Naive thymus-derived CD4-positive, alpha-beta T cell (primary cell): ENCODE measurements at regions of chr1 and their contacts with region 1.

Region 1: GRCh38 chr1:108041360-108042142 is 76.6 kb upstream of the VAV3 start:
- DNase-seq: peak in 3 of 9 donors; percentile 14 to 25 (median 24)
- ATAC-seq: peak; percentile 66
- H3K4me3 ChIP-seq: peak overlapping the region; percentile 12
- H3K4me3 Mint-ChIP-seq: peak overlapping the region in 9 of 10 donors; percentile 12 to 75 (median 52)
- H3K27ac ChIP-seq: peak overlapping the region; percentile 30
- H3K27ac Mint-ChIP-seq: peak overlapping the region; percentile 1 to 86 (median 65)
- H3K4me1 ChIP-seq: peaks cover 8 to 20% of the 10 kb centered on the region in 2 donors
- H3K4me1 Mint-ChIP-seq: peaks cover 15 to 51% (median 30%) of the 10 kb centered on the region in 7 donors
- H3K27me3 ChIP-seq: no peaks in the 10 kb centered on the region
- H3K27me3 Mint-ChIP-seq: no peaks in the 10 kb centered on the region

Region 2: GRCh38 chr1:108057541-108057940 is 16.0 kb after region 1 on chr1:
- CTCF ChIA-PET with region 1: no interaction called
- POLR2A ChIA-PET with region 1: interaction called, 5 read pairs
- intact Hi-C with region 1: loop called in 1 of 2 experiments (anchors 2 kb)
- DNase-seq: no peak
- ATAC-seq: no peak
- H3K4me3 ChIP-seq: no peak overlapping the region
- H3K4me3 Mint-ChIP-seq: no peak overlapping the region
- H3K27ac ChIP-seq: no peak overlapping the region
- H3K27ac Mint-ChIP-seq: no peak overlapping the region
- H3K4me1 ChIP-seq: no peaks in the 10 kb centered on the region
- H3K4me1 Mint-ChIP-seq: peaks cover 0 to 4% (median 0%) of the 10 kb centered on the region in 7 donors
- H3K27me3 ChIP-seq: no peaks in the 10 kb centered on the region
- H3K27me3 Mint-ChIP-seq: no peaks in the 10 kb centered on the region

Region 3: GRCh38 chr1:108075055-108075454 is 33.5 kb after region 1 on chr1:
- CTCF ChIA-PET with region 1: no interaction called
- POLR2A ChIA-PET with region 1: no interaction called
- intact Hi-C with region 1: loop called in 1 of 2 experiments (anchors 2 kb)
- DNase-seq: no peak
- ATAC-seq: peak; percentile 58
- H3K4me3 ChIP-seq: no peak overlapping the region
- H3K4me3 Mint-ChIP-seq: no peak overlapping the region
- H3K27ac ChIP-seq: no peak overlapping the region
- H3K27ac Mint-ChIP-seq: peak overlapping the region in 2 of 9 donors; percentile 21 to 78
- H3K4me1 ChIP-seq: peaks cover 28 to 37% of the 10 kb centered on the region in 2 donors
- H3K4me1 Mint-ChIP-seq: peaks cover 24 to 60% (median 47%) of the 10 kb centered on the region in 7 donors
- H3K27me3 ChIP-seq: no peaks in the 10 kb centered on the region
- H3K27me3 Mint-ChIP-seq: no peaks in the 10 kb centered on the region

Region 4: DNA sequence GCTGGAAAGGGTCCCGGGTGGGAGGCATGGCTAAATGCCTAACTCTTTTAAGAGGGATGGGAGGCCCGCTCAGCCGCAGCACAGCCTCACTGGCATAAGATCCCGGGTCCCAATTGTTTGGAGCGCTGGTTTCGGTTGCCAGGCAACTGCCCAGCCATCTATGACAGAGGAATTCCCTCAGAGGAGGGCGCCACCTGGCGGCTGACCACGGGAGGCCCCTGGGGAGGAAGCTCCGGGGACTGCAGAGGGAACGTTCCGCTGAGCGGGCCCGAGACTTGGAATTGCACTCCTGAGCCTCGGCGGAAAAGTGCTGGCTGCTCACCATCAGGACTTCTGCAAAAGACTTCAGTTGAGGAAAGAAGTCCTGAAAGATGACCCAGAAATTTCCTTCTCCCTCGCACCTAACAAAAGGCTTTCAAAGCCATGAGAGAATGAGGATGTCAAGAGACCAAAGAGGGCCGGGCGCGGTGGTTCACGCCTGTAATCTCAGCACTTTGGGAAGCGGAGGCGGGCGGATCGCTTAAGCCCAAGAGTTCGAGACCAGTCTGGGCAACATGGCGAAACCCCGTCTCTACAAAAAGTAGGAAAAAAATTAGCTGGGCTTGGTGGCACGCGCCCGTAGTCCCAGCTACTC is 1071.2 kb after region 1 on chr1:
- CTCF ChIA-PET with region 1: no interaction called
- POLR2A ChIA-PET with region 1: no interaction called
- intact Hi-C with region 1: no loop called
- DNase-seq: peak; percentile 75 to 93 (median 85)
- ATAC-seq: peak; percentile 75
- H3K4me3 ChIP-seq: peak overlapping the region; percentile 68
- H3K4me3 Mint-ChIP-seq: peak overlapping the region; percentile 78 to 93 (median 88)
- H3K27ac ChIP-seq: peak overlapping the region; percentile 68
- H3K27ac Mint-ChIP-seq: peak overlapping the region; percentile 84 to 96 (median 92)
- H3K4me1 ChIP-seq: peaks cover 16 to 21% of the 10 kb centered on the region in 2 donors
- H3K4me1 Mint-ChIP-seq: peaks cover 23 to 40% (median 28%) of the 10 kb centered on the region in 7 donors
- H3K27me3 ChIP-seq: no peaks in the 10 kb centered on the region
- H3K27me3 Mint-ChIP-seq: peaks cover 0 to 41% (median 0%) of the 10 kb centered on the region in 5 donors